Activated T-helper 2 cell treated with anti-CD3 and anti-CD28 coated beads, Interferon-gamma antibody, Interleukin-2, Interleukin-4, amounts not matched to agents 10 μg/mL and 5 μg/mL and 100 μg/mL, durations not matched to agents 14 hours and 24 hours and 36 hours (primary cell): ENCODE measurements at regions of chr5 and their contacts with region 1.

Region 1: DNA sequence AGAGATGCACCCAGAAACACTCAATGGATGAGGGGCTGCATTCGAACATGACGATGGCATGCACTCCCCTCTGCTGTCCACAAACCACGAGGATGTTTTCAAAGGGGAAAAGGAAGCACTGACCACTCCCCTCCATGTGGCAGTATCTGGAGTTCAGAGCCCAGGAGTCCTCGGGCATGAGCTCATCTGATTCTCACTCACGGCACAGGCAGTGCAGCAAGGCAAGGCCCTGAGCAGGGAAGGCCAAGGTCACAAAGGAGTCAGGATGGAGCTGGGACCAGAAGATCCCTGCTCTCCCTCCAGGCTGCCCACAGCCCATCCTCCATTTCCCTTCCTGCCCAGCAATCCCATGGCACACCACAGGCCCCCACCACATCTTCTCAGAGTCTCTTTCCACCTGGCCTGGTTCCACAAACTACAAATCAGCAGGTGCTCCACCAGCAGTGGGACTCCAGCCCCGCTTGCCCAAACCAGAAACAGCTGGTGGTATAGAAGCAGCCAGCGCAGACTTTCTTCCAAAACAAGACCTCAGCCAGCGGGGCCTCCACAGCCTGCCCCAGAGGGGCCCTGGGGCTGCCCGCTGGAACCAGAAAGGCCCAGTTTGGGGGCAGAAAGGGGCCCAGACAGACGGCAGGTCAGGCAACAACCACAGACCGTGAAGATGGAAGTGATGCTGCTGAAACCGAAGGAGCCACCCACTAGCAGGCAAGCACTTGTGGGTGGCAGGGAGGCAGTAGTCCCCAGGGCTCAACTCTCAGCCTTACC is 12.2 kb downstream of the TNIP1 start:
- DNase-seq: no peak
- H3K4me3 Mint-ChIP-seq: peak overlapping the region; percentile 57
- H3K27ac Mint-ChIP-seq: peak overlapping the region; percentile 89
- H3K4me1 Mint-ChIP-seq: peaks cover 87% of the 10 kb centered on the region
- H3K27me3 Mint-ChIP-seq: no peaks in the 10 kb centered on the region

Region 2: GRCh38 chr5:149960272-149961185 is 1108.1 kb before region 1 on chr5 and contains the start of gene SLC26A2:
- intact Hi-C with region 1: no loop called
- DNase-seq: peak; percentile 94
- H3K4me3 Mint-ChIP-seq: peak within 1 kb of the TSS; percentile 89
- H3K27ac Mint-ChIP-seq: peak within 1 kb of the TSS; percentile 99
- H3K4me1 Mint-ChIP-seq: peaks cover 33% of the 10 kb centered on the region
- H3K27me3 Mint-ChIP-seq: no peaks in the 10 kb centered on the region
- total RNA-seq, gene SLC26A2: 7.7 and 8.0 TPM in 2 replicates

Region 3: GRCh38 chr5:150862070-150862469 is 206.5 kb before region 1 on chr5:
- intact Hi-C with region 1: no loop called
- DNase-seq: no peak
- H3K4me3 Mint-ChIP-seq: no peak overlapping the region
- H3K27ac Mint-ChIP-seq: no peak overlapping the region
- H3K4me1 Mint-ChIP-seq: no peaks in the 10 kb centered on the region
- H3K27me3 Mint-ChIP-seq: peaks cover 1% of the 10 kb centered on the region

Region 4: DNA sequence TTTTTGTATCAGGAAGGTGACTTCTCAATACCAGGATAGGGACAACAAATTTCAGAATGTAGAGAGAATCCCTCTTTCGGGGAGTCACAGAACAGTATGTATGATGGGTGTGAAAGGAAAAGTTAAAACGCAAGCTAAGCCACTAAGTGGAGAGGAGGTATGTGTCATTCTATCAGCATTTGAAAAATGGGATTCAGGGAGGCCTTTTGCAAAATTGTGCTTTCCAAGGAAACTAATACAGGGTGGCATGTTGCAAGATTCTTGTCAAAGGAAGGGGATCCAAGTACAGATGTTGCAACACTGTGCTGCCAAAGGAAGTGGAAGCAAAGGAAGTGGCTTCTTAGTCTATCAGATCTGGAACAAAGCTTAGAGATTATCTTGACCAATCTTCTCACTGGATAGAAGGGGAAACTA is 24.9 kb after region 1 on chr5:
- intact Hi-C with region 1: loop called (anchors 1 kb)
- DNase-seq: no peak
- H3K4me3 Mint-ChIP-seq: peak overlapping the region; percentile 71
- H3K27ac Mint-ChIP-seq: peak overlapping the region; percentile 94
- H3K4me1 Mint-ChIP-seq: peaks cover 67% of the 10 kb centered on the region
- H3K27me3 Mint-ChIP-seq: no peaks in the 10 kb centered on the region

Region 5: GRCh38 chr5:151480384-151481293 is 412.0 kb after region 1 on chr5:
- intact Hi-C with region 1: no loop called
- DNase-seq: no peak
- H3K4me3 Mint-ChIP-seq: no peak overlapping the region
- H3K27ac Mint-ChIP-seq: no peak overlapping the region
- H3K4me1 Mint-ChIP-seq: no peaks in the 10 kb centered on the region
- H3K27me3 Mint-ChIP-seq: no peaks in the 10 kb centered on the region

Region 6: GRCh38 chr5:151675611-151676313 is 607.1 kb after region 1 on chr5:
- intact Hi-C with region 1: no loop called
- DNase-seq: no peak
- H3K4me3 Mint-ChIP-seq: no peak overlapping the region
- H3K27ac Mint-ChIP-seq: no peak overlapping the region
- H3K4me1 Mint-ChIP-seq: peaks cover 3% of the 10 kb centered on the region
- H3K27me3 Mint-ChIP-seq: peaks cover 6% of the 10 kb centered on the region